MCF 10A (cell line): ENCODE measurements at regions of chr7 and their contacts with region 1.

Region 1: GRCh38 chr7:105268511-105269392 is 120.0 kb downstream of the SRPK2 start:
- DNase-seq: peak; percentile 63
- H3K4me3 Mint-ChIP-seq: peak overlapping the region; percentile 85
- H3K27ac Mint-ChIP-seq: peak overlapping the region; percentile 98
- H3K4me1 Mint-ChIP-seq: peaks cover 26% of the 10 kb centered on the region
- H3K27me3 Mint-ChIP-seq: no peaks in the 10 kb centered on the region
- CTCF ChIP-seq: no peak

Region 2: GRCh38 chr7:105187302-105188169 is 81.2 kb before region 1 on chr7:
- CTCF ChIA-PET with region 1: no interaction called
- POLR2A ChIA-PET with region 1: interaction called, 26 read pairs
- intact Hi-C with region 1: no loop called
- DNase-seq: peak; percentile 40
- H3K4me3 Mint-ChIP-seq: no peak overlapping the region
- H3K27ac Mint-ChIP-seq: peak overlapping the region; percentile 67
- H3K4me1 Mint-ChIP-seq: peaks cover 32% of the 10 kb centered on the region
- H3K27me3 Mint-ChIP-seq: no peaks in the 10 kb centered on the region
- CTCF ChIP-seq: no peak

Region 3: DNA sequence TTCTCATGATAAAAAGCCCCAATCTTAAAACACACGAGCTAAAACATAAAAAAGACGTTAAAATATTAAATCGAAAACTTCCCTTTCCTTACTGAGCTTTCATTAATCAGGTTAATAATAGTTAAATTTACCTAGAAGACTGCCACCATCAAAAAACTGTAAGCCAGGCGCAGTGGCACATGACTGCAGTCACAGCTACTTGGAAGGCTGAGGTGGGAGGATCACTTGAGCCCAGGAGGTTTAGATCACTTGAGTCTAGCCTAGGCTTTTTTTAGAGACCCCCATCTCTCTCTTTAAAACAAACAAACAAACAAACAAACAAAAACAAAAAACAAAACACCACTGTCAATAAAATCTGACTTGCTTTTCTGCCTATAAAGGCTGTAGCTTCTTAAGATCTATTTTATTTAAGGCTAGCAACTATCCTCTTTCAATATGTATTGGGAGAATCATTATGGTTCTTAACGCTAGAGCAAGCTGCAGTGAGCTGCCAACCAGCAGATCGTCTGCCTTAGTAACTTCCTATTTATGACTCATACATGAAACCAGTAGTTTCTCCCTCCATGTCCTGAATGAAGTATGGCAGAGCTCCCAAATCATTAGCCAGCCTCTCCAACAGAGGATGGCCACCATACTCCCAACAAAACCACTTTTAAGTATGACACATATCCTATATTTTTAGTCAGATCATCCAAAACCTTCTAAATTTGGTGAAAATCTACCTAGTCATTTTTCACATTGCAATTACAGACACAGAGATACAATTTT is 43.7 kb before region 1 on chr7:
- CTCF ChIA-PET with region 1: interaction called, 5 read pairs
- POLR2A ChIA-PET with region 1: interaction called, 45 read pairs
- intact Hi-C with region 1: loop called (anchors 5 kb)
- DNase-seq: peak; percentile 91
- H3K4me3 Mint-ChIP-seq: peak overlapping the region; percentile 65
- H3K27ac Mint-ChIP-seq: peak overlapping the region; percentile 95
- H3K4me1 Mint-ChIP-seq: peaks cover 31% of the 10 kb centered on the region
- H3K27me3 Mint-ChIP-seq: no peaks in the 10 kb centered on the region
- CTCF ChIP-seq: no peak

Region 4: GRCh38 chr7:105304040-105304895 is 35.5 kb after region 1 on chr7:
- CTCF ChIA-PET with region 1: interaction called, 3 read pairs
- POLR2A ChIA-PET with region 1: interaction called, 21 read pairs
- intact Hi-C with region 1: no loop called
- DNase-seq: peak; percentile 66
- H3K4me3 Mint-ChIP-seq: peak overlapping the region; percentile 57
- H3K27ac Mint-ChIP-seq: peak overlapping the region; percentile 69
- H3K4me1 Mint-ChIP-seq: peaks cover 23% of the 10 kb centered on the region
- H3K27me3 Mint-ChIP-seq: no peaks in the 10 kb centered on the region
- CTCF ChIP-seq: no peak